Right ventricle myocardium inferior (tissue), 1 donor: ENCODE measurements at regions of chr16 and their contacts with region 1.

Region 1: DNA sequence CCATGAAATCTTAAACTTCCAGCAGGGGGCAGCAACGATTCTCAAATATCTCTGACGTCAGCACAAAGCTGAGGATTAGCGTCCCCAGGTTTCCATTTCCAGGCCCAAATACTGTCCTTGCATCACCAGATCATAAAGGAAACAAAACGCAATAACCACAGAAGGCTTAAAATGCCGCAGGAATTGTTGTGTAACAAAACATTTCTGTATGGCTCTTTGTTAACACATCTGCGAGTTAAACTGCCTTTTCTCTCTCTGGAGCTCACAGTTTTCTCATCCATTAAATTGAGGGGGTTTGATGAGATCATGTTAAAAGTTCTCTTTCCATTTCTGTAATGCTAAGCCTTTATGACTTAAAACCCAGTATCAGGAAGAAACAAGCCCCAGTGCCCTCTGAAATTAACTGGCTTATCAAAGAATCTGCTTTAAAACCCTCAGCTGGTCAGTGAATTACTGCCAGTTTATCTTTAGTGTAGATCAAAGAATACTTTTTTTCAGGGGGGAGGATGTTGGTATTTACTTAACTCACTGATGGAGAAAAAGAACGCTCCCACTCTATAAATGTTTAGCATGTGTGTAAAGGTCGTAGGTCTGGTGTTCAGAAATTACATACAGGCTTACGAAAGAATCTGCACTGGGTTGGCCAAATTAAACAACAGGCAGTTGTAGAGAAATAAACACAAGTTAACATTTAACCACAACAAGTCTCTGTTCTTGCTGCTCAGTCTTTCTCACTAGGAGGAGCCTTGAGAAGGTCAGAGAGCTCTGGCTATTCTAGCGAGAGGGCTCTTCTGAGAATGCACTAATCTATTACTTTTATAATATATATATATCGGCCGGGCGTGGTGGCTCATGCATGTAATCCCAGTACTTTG is 10.6 kb upstream of the TERF2 start:
- DNase-seq: no peak
- ATAC-seq: peak; percentile 54

Region 2: DNA sequence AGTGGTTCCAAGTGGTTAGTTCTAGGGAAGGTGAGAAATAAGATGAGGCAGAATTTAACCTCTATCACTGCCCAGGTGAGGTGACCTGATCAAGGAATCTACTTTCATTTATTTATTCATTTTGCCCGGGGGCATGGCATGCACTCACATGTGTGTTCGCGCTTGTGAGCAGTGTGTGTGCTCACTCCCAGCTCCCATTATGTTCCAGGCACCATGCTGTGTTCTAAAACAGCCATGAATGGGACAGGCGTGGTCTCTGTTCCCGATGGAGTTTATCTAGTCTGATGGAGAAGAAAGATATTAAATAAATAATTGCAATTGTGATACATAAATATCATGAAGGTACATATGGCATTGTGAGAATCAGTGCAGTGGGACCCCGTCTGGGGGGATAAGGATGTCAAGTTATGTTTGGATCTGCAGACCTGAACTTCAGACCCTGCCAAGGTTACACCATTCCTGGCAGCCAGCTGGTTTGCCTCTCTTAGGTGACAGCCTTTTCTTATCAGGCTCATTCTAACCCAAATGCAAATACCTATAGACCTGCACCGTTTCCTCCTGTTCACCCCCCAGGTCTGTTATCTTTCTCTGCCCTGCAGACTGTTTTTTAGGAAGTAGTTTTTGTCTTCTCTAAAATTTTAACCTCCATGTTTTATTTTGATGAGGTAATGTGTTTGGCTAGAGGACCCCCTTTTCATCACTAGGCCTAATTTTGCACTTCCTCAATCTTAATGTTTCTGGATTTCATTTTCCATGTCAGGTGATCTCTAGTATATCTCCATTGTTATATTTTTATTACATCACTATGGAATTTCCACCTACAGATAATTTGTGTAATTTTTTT is 39.8 kb after region 1 on chr16:
- intact Hi-C with region 1: no loop called
- DNase-seq: no peak
- ATAC-seq: peak; percentile 23

Region 3: DNA sequence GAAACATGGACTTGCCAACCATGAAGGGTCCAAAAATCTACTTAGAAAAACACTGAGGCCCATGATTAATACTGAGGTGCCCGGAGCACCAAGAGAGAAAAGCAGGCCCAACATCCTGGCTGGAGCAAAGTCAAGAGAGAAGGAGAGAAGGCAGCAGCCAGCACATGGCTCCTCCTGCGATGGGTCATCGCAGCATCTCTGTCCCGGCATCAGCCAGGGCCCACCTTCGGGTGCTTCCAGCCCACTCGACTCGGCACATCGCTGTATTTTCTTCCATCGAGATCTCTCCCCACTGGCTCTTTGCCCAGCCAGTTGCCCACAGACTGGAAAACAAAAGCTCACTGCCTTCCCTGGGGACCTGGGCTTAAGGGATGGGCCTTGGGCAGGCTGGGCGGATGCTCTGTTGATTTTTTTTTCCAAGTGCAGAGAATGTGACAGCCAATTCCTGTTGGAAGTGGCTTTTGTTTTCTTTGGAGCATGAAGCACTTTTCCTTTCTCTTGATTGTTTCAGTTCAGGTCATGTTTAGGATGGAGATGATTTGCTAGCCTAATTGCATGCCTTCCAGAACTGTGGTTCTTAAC is 86.1 kb after region 1 on chr16:
- intact Hi-C with region 1: loop called (anchors 5 kb)
- DNase-seq: peak; percentile 77
- ATAC-seq: peak; percentile 84

Region 4: GRCh38 chr16:69618307-69618706 is 221.9 kb after region 1 on chr16:
- intact Hi-C with region 1: loop called (anchors 5 kb)
- DNase-seq: no peak
- ATAC-seq: peak; percentile 51